ENCODE measurements at regions of chr5 and their contacts with region 1.

Region 1: DNA sequence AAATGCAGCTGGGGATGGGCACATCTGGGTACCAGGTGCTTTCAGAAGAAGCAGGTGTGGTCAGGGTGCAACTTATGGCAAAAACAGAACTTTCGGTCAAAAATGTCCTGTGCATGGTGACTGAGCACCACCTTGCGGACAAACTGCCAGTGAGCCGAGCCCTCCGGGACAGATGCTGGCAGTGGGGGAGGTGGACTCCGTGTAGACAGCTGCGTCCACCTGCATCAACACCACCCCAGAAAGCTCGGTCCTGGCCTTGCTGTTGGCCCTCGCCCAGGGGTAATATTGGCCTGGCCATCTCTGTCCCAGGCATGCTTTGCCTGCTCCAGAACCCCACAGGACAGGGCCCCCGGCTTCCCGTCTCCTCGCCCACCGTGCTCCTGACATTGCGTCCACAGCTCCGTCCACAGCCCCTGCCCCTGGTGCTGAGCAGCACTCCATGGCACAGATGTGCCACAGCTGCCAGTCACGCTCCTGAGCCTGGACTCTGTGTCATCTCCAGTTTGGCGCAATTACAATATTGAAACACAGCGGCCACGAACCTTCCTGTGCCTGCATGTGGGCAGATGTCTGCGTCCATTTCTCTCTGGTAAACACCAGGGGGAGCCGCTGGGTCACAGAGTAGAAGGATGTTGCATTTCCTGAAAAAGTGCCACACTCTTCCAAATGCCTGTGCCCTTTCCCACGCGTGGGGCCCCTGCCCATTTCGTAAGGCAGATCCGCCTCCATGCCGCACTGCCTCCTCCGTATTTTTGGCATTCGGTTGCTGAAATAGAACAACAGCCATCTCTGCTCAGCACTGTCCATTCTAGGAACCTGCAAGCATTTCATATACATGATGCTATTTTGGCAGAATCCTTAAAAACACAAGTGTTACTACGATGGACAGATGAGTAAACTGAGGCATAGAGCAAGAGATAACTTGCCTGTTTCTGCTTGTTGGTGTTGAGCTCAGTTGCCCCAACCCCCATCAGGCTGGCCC is 33.4 kb upstream of the SLC6A19 start:
- DNase-seq: peak; percentile 74

Region 2: DNA sequence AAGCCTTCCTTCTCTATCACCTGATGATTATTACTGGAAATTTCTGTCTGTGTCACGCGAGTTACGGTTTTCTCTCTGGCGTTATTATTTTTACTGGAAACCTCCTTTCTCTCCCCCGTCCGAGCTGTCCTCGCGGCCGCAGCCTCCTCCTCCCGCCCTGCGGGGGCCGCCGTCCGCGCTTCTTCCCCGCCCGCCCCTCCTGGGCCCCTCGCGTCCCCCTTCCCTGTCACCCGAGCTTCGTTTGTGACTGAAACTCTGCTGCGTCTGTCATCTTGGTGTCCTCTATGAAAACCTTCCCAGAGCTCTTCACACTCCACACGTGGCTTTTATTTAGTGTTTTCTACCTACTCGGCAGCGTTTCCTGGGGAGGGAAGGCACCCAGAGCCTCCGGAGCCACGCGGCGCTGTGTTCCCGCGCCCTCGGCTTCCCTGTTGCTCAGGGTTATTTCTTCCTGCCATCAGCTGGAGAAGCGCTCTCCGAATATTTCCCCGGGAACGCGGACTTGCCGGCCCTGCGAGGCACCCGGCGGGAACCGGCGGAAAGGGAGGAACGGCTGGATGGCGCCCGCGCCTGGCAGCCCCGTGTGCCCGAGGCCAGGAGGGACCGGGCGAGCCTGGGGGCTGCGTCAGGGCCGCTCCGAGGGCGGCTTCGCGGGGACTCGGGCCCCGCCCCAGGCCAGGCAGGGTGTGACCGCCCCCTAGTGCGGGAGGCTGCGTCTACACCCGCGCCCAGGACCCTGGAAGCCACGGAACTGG is 241.4 kb before region 1 on chr5:
- in situ Hi-C with region 1: loop called (anchors 25 kb)
- DNase-seq: no peak

Region 3: GRCh38 chr5:1641560-1642166 is 473.6 kb after region 1 on chr5:
- in situ Hi-C with region 1: loop called (anchors 25 kb)
- DNase-seq: peak; percentile 81

Measured in KBM-7 (cell line).